ENCODE measurements at regions of chr14 and their contacts with region 1.

Region 1: GRCh38 chr14:75307700-75308379 is 29.2 kb downstream of the FOS start:
- DNase-seq: peak; percentile 84 to 92 (median 88)
- ATAC-seq: peak; percentile 60 to 74 (median 64)
- H3K4me3 ChIP-seq: no peak overlapping the region
- H3K27ac ChIP-seq: no peak overlapping the region
- H3K4me1 ChIP-seq: peaks cover 0 to 41% (median 14%) of the 10 kb centered on the region in 12 donors
- H3K27me3 ChIP-seq: no peaks in the 10 kb centered on the region
- CTCF ChIP-seq: peak; percentile 83 to 95 (median 93)
- POLR2A ChIP-seq: no peak

Region 2: GRCh38 chr14:74860906-74861733 is 446.7 kb before region 1 on chr14:
- intact Hi-C with region 1: loop called in 1 of 10 experiments (anchors 10 kb)
- DNase-seq: peak; percentile 85 to 93 (median 91)
- ATAC-seq: peak; percentile 32 to 85 (median 83)
- H3K4me3 ChIP-seq: no peak overlapping the region
- H3K27ac ChIP-seq: no peak overlapping the region
- H3K4me1 ChIP-seq: peaks cover 0 to 20% (median 5%) of the 10 kb centered on the region in 12 donors
- H3K27me3 ChIP-seq: no peaks in the 10 kb centered on the region
- CTCF ChIP-seq: peak; percentile 80 to 98 (median 90)
- POLR2A ChIP-seq: no peak

Region 3: GRCh38 chr14:75132382-75133086 is 175.3 kb before region 1 on chr14:
- intact Hi-C with region 1: loop called in 8 of 10 experiments (anchors 1 to 2 kb)
- DNase-seq: peak in 2 of 5 donors; percentile 52 to 60
- ATAC-seq: peak in 3 of 4 donors; percentile 75 to 87 (median 81)
- H3K4me3 ChIP-seq: no peak overlapping the region
- H3K27ac ChIP-seq: peak overlapping the region in 3 of 12 donors; percentile 29 to 43 (median 33)
- H3K4me1 ChIP-seq: peaks cover 0 to 19% (median 11%) of the 10 kb centered on the region in 12 donors
- H3K27me3 ChIP-seq: no peaks in the 10 kb centered on the region
- CTCF ChIP-seq: peak; percentile 60 to 83 (median 71)
- POLR2A ChIP-seq: no peak

Region 4: DNA sequence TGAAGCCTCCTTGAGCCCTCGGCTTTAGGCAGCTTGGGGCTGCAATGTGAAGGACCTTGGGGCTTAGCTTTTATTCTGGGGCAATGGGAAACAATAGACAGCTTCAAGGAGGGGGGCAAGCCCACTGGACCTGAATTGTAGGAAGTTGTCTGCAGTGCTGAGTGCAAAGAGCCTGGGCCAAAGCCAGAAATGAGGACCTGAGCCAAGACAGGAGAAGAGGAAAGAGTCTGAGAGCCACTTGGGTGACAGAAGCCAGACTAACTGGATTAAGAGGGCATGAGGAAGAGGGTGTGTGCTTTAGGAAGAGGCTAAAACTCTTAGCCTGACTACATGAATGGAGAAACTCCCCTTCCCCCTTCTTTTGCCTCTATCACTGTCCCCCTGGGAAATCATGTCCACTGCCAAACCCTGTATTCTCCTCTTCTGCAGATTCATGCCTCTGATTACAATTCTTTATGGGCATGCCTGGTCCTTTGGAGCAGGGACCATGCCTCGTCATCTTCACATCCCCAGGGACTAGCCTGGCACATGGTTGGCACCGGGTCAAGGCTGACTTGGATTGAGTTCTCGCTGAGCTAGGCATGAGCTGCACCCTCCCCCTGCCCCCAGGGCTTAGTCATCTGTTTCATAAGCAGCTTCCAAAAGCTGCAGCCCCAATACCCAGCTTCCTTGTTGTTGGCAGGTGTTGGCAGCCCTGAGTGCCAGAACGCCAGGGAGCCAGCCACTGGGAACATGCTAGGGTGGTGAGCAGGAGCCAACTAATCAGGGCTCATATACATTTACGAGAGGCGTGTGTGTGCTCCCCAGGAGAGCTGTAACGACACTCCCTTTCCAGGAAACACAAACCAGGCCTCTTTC is 92.2 kb after region 1 on chr14:
- intact Hi-C with region 1: loop called in 2 of 10 experiments (anchors 5 to 10 kb)
- DNase-seq: peak; percentile 84 to 96 (median 90)
- ATAC-seq: peak; percentile 95 to 96 (median 96)
- H3K4me3 ChIP-seq: no peak overlapping the region
- H3K27ac ChIP-seq: peak overlapping the region in 11 of 12 donors; percentile 40 to 83 (median 70)
- H3K4me1 ChIP-seq: peaks cover 0 to 33% (median 25%) of the 10 kb centered on the region in 12 donors
- H3K27me3 ChIP-seq: no peaks in the 10 kb centered on the region
- CTCF ChIP-seq: no peak
- POLR2A ChIP-seq: no peak

Region 5: DNA sequence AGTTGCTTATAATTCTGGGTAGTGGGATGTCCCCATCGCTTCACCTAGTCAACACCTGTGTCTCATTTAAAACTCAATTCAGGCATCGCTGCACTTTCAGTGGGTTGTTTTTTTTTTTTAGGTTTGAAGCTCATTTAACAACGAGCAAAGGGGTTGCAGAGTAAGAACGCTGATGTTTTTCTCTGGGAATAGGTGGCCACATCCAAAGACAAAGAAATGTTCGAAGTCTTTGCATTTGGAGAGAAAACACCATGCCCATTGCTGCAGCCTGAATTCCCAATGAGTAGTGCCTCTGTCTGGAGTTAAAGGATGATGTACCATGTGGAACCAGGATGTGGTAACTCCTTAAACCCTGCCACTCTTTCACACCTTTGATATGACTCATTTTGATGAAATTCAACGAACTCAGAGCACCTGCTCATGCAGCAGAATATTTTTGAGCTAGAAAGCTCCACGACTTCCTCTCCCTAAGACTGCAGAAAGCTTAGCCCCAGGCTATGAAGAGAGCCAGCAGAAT is 179.4 kb after region 1 on chr14:
- intact Hi-C with region 1: loop called (anchors 1 to 2 kb)
- DNase-seq: no peak
- ATAC-seq: no peak
- H3K4me3 ChIP-seq: no peak overlapping the region
- H3K27ac ChIP-seq: no peak overlapping the region
- H3K4me1 ChIP-seq: peaks cover 0 to 4% (median 0%) of the 10 kb centered on the region in 12 donors
- H3K27me3 ChIP-seq: no peaks in the 10 kb centered on the region
- CTCF ChIP-seq: no peak
- POLR2A ChIP-seq: no peak

Region 6: GRCh38 chr14:75654127-75654732 is 346.4 kb after region 1 on chr14:
- intact Hi-C with region 1: loop called in 1 of 10 experiments (anchors 10 kb)
- DNase-seq: peak; percentile 71 to 83 (median 78)
- ATAC-seq: peak; percentile 79 to 87 (median 84)
- H3K4me3 ChIP-seq: no peak overlapping the region
- H3K27ac ChIP-seq: no peak overlapping the region
- H3K4me1 ChIP-seq: peaks cover 0 to 13% (median 0%) of the 10 kb centered on the region in 12 donors
- H3K27me3 ChIP-seq: no peaks in the 10 kb centered on the region
- CTCF ChIP-seq: peak; percentile 94 to 99 (median 96)
- POLR2A ChIP-seq: no peak

Measured in heart left ventricle (tissue), 16 donors.